Heart right ventricle (tissue), 16 donors: ENCODE measurements at regions of chr17 and their contacts with region 1.

Region 1: GRCh38 chr17:17568749-17569195 is 22.7 kb downstream of the PEMT start:
- DNase-seq: peak; percentile 68 to 85
- ATAC-seq: peak in 7 of 8 donors; percentile 15 to 75 (median 44)
- H3K4me3 ChIP-seq: no peak overlapping the region
- H3K27ac ChIP-seq: peak overlapping the region in 9 of 10 donors; percentile 20 to 96 (median 66)
- H3K4me1 ChIP-seq: peaks cover 34 to 69% (median 52%) of the 10 kb centered on the region in 9 donors
- H3K27me3 ChIP-seq: no peaks in the 10 kb centered on the region
- CTCF ChIP-seq: peak; percentile 46 to 79 (median 71)

Region 2: DNA sequence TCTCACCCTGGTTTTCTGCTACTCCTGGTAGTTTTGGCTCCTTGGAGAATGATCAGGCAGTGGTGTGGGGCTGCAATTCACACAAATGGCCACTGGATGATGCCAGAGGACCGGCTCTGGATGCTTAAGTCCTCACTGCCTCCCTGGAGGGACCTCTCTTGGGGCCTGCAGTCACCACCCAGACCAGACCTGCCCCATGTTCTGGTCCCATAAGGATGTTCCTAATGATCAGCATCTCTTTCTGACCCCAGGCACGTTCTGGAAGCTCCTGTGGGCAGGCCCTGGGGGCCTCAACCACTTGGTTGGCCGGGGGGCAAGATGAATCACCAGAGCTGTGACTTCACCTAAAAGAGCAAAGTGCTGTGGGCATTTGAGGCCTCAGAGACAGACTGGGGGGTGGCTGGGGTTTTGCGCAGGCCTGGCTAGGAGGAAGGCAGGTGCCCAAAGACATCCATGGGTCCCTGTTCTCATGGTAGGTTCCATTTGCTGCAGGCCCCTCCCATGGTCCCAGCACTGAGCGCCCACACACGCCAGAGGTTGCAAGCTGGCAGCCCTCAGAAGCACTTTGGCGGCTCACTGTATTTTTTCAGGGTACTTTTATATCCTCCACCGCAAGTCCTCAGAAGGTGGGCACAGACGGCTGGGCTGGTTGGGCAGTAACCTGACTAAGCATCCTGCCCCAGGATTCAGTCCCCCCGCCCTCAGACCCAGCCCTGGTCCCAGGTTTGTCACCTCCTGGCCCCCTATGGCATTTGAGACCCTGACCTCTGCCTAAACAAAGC is 212.4 kb before region 1 on chr17:
- intact Hi-C with region 1: loop called in 9 of 10 experiments (anchors 1 to 5 kb)
- DNase-seq: peak; percentile 73 to 79
- ATAC-seq: peak; percentile 63 to 90 (median 77)
- H3K4me3 ChIP-seq: no peak overlapping the region
- H3K27ac ChIP-seq: no peak overlapping the region
- H3K4me1 ChIP-seq: peaks cover 9 to 26% (median 16%) of the 10 kb centered on the region in 9 donors
- H3K27me3 ChIP-seq: no peaks in the 10 kb centered on the region
- CTCF ChIP-seq: peak in 8 of 9 donors; percentile 93 to 100 (median 99)

Region 3: DNA sequence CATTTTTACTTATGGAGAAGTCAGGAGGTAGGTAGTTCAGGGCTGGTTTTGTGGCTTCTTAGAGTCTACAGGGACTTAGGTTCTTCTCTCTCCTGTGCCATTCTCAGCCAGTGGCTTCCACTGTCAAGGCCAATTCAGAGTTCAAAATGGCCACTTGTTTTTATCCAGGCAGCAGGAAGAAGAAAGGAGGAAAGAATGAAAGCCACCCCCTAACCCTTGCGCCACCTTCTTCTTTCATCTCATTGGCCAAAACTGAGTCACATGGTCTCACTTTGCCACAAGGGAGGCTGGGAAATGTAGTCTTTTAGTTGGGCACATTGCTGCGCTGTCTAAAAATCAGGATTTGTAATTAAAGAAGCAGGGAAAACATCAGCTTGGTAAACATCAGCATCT is 152.8 kb before region 1 on chr17:
- intact Hi-C with region 1: loop called in 2 of 10 experiments (anchors 2 to 5 kb)
- DNase-seq: no peak
- ATAC-seq: peak in 2 of 8 donors; percentile 21 to 25
- H3K4me3 ChIP-seq: no peak overlapping the region
- H3K27ac ChIP-seq: peak overlapping the region in 9 of 10 donors; percentile 14 to 77 (median 71)
- H3K4me1 ChIP-seq: peaks cover 2 to 69% (median 44%) of the 10 kb centered on the region in 9 donors
- H3K27me3 ChIP-seq: no peaks in the 10 kb centered on the region
- CTCF ChIP-seq: no peak

Region 4: GRCh38 chr17:17523001-17523730 is 45.6 kb before region 1 on chr17:
- intact Hi-C with region 1: loop called in 1 of 10 experiments (anchors 5 kb)
- DNase-seq: peak in 1 of 2 donors; percentile 6
- ATAC-seq: no peak
- H3K4me3 ChIP-seq: no peak overlapping the region
- H3K27ac ChIP-seq: no peak overlapping the region
- H3K4me1 ChIP-seq: peaks cover 0 to 30% (median 17%) of the 10 kb centered on the region in 9 donors
- H3K27me3 ChIP-seq: no peaks in the 10 kb centered on the region
- CTCF ChIP-seq: no peak

Region 5: DNA sequence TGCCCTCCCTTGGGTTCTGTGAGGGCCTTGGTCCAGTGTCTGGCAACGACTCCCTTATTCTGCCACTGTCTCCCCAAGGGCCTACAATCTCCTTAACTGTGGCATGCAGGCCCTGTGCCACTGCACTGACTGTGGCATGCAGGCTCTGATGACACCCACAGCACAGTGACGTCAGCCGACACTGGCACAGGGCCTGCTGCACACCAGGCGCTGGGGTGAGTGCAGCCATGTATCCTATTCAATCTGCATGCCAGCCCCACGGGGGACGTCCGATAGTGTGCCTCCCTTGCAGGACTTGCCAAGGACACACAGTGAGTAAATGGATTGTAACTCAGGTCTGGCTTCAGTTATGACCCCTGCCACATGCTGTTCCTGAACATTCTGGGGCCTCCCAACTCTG is 32.8 kb before region 1 on chr17:
- intact Hi-C with region 1: loop called in 1 of 10 experiments (anchors 1 kb)
- DNase-seq: peak; percentile 86 to 87
- ATAC-seq: peak; percentile 90 to 97 (median 96)
- H3K4me3 ChIP-seq: no peak overlapping the region
- H3K27ac ChIP-seq: peak overlapping the region; percentile 56 to 87 (median 72)
- H3K4me1 ChIP-seq: peaks cover 4 to 37% (median 18%) of the 10 kb centered on the region in 9 donors
- H3K27me3 ChIP-seq: no peaks in the 10 kb centered on the region
- CTCF ChIP-seq: no peak

Region 6: DNA sequence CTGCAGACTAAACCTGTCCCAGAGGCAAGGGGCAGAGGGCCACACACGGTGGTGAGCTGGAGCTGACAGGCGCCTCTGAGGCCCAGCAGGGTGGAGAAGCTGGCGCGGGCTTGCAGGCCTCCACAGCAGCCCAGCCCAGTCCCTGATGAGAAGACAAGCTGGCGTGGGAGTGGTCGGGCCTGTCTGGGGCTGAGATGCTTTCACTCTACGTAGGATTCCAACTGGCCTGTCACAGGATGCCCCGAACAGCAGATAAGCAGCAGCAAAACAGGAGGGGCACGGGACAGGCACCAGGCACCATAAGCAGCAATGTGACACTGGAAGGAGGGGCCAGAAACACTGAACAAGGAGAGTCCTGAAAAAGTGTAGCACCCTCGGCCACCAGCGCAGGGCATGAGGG is 17.4 kb before region 1 on chr17:
- intact Hi-C with region 1: loop called in 1 of 10 experiments (anchors 2 kb)
- DNase-seq: peak; percentile 71 to 72
- ATAC-seq: peak; percentile 73 to 88 (median 82)
- H3K4me3 ChIP-seq: no peak overlapping the region
- H3K27ac ChIP-seq: peak overlapping the region; percentile 56 to 88 (median 80)
- H3K4me1 ChIP-seq: peaks cover 0 to 65% (median 48%) of the 10 kb centered on the region in 9 donors
- H3K27me3 ChIP-seq: no peaks in the 10 kb centered on the region
- CTCF ChIP-seq: no peak

Region 7: DNA sequence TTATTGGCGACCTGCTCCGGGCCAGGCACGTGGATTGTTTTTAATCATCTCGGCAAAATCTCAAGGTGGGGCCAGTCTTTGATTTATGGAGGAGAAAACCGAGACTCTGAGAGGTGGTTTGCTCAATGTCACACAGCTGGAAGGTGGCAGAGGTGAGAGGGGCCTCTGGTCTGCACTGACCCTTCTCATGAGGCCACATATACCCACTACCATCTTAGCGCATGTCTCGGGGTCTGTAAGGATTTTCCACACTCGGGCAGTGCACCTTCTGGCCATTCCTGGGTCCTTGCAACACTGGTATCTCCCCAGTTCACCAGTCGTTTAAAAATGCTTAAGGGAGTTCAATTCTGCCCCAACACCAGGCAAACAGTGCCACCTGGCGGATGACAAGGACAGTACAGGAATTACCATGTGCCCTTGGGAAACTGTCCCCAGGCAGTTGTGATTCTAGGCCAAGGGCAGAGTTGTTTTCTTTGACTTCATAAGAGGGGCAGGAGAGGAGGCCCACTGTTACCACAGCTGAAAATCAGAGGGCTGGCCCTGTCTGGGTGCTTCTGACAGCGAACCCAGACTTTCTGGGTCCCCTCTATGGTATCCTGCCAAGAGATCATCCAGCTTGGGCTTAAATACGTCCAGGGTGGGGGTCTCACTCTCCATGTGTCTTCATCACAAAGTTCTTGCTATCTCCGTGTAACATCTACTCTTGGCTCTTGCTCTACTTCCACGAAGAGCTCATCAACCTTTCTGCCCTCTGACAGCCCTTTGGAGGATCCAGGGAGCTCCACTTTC is 73.0 kb after region 1 on chr17:
- intact Hi-C with region 1: loop called in 2 of 10 experiments (anchors 5 kb)
- DNase-seq: peak; percentile 72 to 85
- ATAC-seq: peak; percentile 80 to 94 (median 87)
- H3K4me3 ChIP-seq: no peak overlapping the region
- H3K27ac ChIP-seq: peak overlapping the region in 1 of 10 donors; percentile 31
- H3K4me1 ChIP-seq: peaks cover 0 to 14% (median 0%) of the 10 kb centered on the region in 9 donors
- H3K27me3 ChIP-seq: peaks cover 0 to 6% (median 0%) of the 10 kb centered on the region in 7 donors
- CTCF ChIP-seq: peak; percentile 81 to 94 (median 89)